HepG2 (cell line): ENCODE measurements at regions of chr4 and their contacts with region 1.

Region 1: DNA sequence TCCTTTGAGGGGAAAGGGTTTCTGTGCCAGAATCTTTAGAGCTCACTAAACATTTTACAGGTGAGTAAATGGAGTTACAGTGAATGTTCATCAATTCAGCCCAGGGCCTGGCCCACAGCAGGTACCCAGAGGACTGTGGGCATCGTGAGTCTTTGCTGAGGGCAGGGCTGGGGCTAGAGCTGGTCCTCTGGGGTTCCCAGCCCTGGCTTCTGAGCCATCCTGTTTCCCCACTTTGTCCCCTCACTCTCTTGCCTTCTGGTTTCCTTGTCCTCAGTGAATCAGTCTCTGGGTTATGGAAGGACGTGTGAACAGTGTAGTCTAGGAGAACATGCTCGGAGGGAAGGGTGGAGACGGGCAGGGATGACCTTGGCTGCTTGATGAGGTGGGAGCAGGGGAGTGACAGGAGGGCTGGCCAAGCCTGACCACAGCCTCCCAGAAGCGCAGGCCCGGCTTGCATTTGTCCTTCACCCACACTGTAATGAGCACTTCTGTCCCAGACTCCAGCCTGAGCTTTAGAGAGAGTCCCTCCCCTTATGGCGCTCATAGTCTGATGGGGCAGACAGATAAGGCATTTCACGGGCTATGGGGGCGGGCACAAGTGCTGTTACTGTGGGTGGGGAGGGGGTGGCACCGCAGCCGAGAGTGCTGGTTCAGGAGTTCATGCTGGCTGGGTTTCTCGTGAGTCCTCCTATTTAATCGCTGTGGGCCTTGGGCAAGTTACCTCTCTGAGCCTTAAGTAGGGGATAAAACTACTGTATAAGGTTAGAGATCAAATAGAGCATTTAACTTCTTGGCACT is 17.3 kb downstream of the TBC1D14 start:
- DNase-seq: peak; percentile 96
- ATAC-seq: peak; percentile 93
- H3K4me3 ChIP-seq: peak overlapping the region; percentile 7 to 31 (median 11); a peak in 2 of 6 replicates
- H3K27ac ChIP-seq: peak overlapping the region; percentile 63
- H3K4me1 ChIP-seq: peaks cover 91% of the 10 kb centered on the region
- H3K27me3 ChIP-seq: no peaks in the 10 kb centered on the region
- CTCF ChIP-seq: no peak
- EP300 ChIP-seq: no peak
- POLR2A ChIP-seq: peak in 1 of 2 experiments; percentile 49; a peak in 1 of 4 replicates
- RAD21 ChIP-seq: no peak

Region 2: GRCh38 chr4:6783053-6783981 is 143.6 kb before region 1 on chr4:
- CTCF ChIA-PET with region 1: no interaction called
- POLR2A ChIA-PET with region 1: no interaction called
- in situ Hi-C with region 1: no loop called
- intact Hi-C with region 1: no loop called
- DNase-seq: peak; percentile 80
- ATAC-seq: peak; percentile 74
- H3K4me3 ChIP-seq: peak overlapping the region; percentile 93 to 98 (median 95)
- H3K27ac ChIP-seq: peak overlapping the region; percentile 93
- H3K4me1 ChIP-seq: peaks cover 59% of the 10 kb centered on the region
- H3K27me3 ChIP-seq: no peaks in the 10 kb centered on the region; a peak in 1 of 5 replicates
- CTCF ChIP-seq: peak; percentile 65
- EP300 ChIP-seq: 0 out of 4 replicates have a peak, but pooled peaks have one; percentile 25 to 31
- POLR2A ChIP-seq: peak in 1 of 2 experiments; percentile 58; a peak in 2 of 4 replicates
- RAD21 ChIP-seq: no peak; the same call in none of the 2 replicates

Region 3: GRCh38 chr4:6884341-6884870 is 42.5 kb before region 1 on chr4:
- CTCF ChIA-PET with region 1: no interaction called
- POLR2A ChIA-PET with region 1: no interaction called
- in situ Hi-C with region 1: no loop called
- intact Hi-C with region 1: no loop called
- DNase-seq: no peak
- ATAC-seq: no peak
- H3K4me3 ChIP-seq: no peak overlapping the region
- H3K27ac ChIP-seq: no peak overlapping the region
- H3K4me1 ChIP-seq: no peaks in the 10 kb centered on the region
- H3K27me3 ChIP-seq: no peaks in the 10 kb centered on the region
- CTCF ChIP-seq: no peak
- EP300 ChIP-seq: no peak
- POLR2A ChIP-seq: no peak
- RAD21 ChIP-seq: no peak

Region 4: GRCh38 chr4:6963139-6963611 is 36.3 kb after region 1 on chr4:
- CTCF ChIA-PET with region 1: no interaction called
- POLR2A ChIA-PET with region 1: no interaction called
- in situ Hi-C with region 1: no loop called
- intact Hi-C with region 1: no loop called
- DNase-seq: peak; percentile 48
- ATAC-seq: peak; percentile 93
- H3K4me3 ChIP-seq: no peak overlapping the region; a peak in 1 of 6 replicates
- H3K27ac ChIP-seq: no peak overlapping the region
- H3K4me1 ChIP-seq: peaks cover 47% of the 10 kb centered on the region
- H3K27me3 ChIP-seq: no peaks in the 10 kb centered on the region
- CTCF ChIP-seq: no peak
- EP300 ChIP-seq: no peak
- POLR2A ChIP-seq: no peak
- RAD21 ChIP-seq: no peak

Region 5: DNA sequence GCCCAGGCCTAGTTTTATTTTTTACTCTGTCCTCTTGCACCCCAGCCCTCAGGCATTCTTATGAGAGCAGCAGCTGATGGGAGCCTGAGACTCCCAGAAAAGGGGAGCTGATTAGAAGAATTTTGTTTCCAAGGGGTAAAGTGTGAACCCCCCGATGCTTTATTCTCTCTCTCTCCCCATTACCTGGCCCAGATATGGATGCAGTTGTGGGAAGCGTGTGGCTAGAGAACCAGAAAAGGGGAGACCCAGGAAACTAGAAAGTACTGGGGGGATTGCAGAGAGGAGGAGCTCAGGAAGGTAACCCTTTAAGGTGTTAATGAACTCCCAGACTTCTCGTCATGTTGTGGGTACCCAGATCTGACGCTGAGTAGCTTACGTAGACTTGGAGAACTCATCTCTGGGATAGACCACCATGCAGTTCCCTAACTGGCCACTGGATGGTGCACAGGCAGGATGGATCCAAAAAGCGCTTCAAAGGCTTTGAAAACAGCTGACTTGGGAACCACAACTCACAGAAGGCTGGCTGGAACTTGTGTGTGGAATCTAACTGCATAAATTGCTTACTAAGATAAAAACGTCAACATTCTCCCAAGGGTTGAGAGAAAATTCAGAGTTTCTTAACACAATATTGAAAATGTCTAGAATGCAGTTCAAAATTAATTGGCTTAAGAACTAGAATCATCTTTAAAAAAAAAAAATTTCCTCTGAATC is 47.4 kb after region 1 on chr4:
- CTCF ChIA-PET with region 1: no interaction called
- POLR2A ChIA-PET with region 1: interaction called, 3 read pairs
- in situ Hi-C with region 1: no loop called
- intact Hi-C with region 1: loop called (anchors 5 kb)
- DNase-seq: peak; percentile 81
- ATAC-seq: peak; percentile 94
- H3K4me3 ChIP-seq: no peak overlapping the region
- H3K27ac ChIP-seq: no peak overlapping the region
- H3K4me1 ChIP-seq: peaks cover 16% of the 10 kb centered on the region
- H3K27me3 ChIP-seq: no peaks in the 10 kb centered on the region
- CTCF ChIP-seq: peak; percentile 87
- EP300 ChIP-seq: no peak
- POLR2A ChIP-seq: no peak
- RAD21 ChIP-seq: peak; percentile 74